ENCODE measurements at regions of chr6 and their contacts with region 1.

Region 1: GRCh38 chr6:165508321-165508869 is 154.6 kb downstream of the PDE10A start:
- DNase-seq: no peak
- H3K4me3 ChIP-seq: no peak overlapping the region
- H3K27ac ChIP-seq: no peak overlapping the region
- H3K4me1 ChIP-seq: no peaks in the 10 kb centered on the region
- H3K27me3 ChIP-seq: no peaks in the 10 kb centered on the region
- CTCF ChIP-seq: no peak
- EP300 ChIP-seq: no peak
- POLR2A ChIP-seq: no peak

Region 2: GRCh38 chr6:165200178-165200577 is 308.2 kb before region 1 on chr6:
- in situ Hi-C with region 1: no loop called
- intact Hi-C with region 1: no loop called
- DNase-seq: no peak
- H3K4me3 ChIP-seq: no peak overlapping the region
- H3K27ac ChIP-seq: no peak overlapping the region
- H3K4me1 ChIP-seq: no peaks in the 10 kb centered on the region
- H3K27me3 ChIP-seq: no peaks in the 10 kb centered on the region
- CTCF ChIP-seq: no peak
- EP300 ChIP-seq: no peak
- POLR2A ChIP-seq: no peak

Region 3: DNA sequence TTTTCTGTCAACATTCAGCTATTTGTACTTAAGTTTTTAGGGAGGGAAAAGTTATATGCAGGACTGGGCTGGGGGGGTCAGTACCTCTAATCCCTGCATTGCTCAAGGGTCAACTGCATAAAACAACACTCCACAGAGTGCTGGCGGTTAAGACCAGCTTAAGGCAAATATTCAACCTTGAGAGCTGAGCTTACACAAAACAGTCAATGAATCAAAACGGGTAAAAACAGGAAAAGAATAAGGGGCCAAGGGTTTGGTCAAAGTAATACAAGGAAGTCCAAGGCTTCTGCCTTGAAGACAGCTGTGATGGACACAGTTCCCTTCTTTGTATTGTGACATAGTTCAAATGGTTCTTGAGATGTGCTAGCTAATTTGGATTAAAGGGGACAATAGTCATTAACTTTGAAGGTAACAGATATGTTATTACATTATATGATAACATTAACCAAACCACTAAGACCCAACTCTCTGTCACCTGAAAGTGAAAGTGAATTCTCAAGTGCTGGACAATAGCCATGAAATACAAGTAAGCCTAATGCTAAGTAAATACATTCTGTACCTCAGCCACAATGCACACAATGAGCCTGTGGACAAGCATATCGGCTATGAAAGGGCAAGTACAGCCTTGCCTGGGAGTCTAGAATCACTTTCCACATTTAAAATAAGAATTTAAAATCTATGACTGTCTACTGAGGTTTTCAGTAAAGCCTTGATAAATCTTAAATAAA is 47.9 kb after region 1 on chr6:
- in situ Hi-C with region 1: no loop called
- intact Hi-C with region 1: loop called (anchors 2 kb)
- DNase-seq: no peak
- H3K4me3 ChIP-seq: no peak overlapping the region
- H3K27ac ChIP-seq: no peak overlapping the region
- H3K4me1 ChIP-seq: peaks cover 0 to 5% (median 0%) of the 10 kb centered on the region in 4 donors
- H3K27me3 ChIP-seq: no peaks in the 10 kb centered on the region
- CTCF ChIP-seq: no peak
- EP300 ChIP-seq: no peak
- POLR2A ChIP-seq: no peak

Region 4: DNA sequence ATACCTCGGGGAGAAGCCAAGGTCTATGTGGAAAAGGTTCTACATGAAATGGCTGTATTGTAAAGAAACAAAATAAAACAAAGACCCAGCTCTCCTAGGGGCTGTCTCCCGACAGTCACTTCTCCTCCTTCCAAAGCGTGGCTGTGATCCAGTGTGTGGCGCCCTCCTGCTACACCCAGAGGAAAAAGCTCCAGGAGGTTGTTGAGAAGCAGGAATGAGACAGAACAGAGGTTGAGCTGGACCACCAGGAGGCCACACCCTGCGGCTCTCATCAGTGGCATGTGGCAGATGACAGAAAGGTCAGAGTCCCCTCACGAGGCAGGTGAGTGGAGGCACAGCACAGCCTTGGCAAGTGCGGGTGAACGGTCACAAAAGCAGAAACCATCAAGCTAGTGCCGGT is 423.3 kb after region 1 on chr6:
- in situ Hi-C with region 1: no loop called
- intact Hi-C with region 1: no loop called
- DNase-seq: no peak
- H3K4me3 ChIP-seq: no peak overlapping the region
- H3K27ac ChIP-seq: no peak overlapping the region
- H3K4me1 ChIP-seq: no peaks in the 10 kb centered on the region
- H3K27me3 ChIP-seq: no peaks in the 10 kb centered on the region
- CTCF ChIP-seq: no peak
- EP300 ChIP-seq: no peak
- POLR2A ChIP-seq: no peak